ENCODE measurements at regions of chr19 and their contacts with region 1.

Region 1: GRCh38 chr19:39435499-39436349 is at the start of gene RPS16:
- H3K4me3 ChIP-seq: peak within 1 kb of the TSS; percentile 79
- H3K27ac ChIP-seq: peak within 1 kb of the TSS; percentile 100
- H3K4me1 ChIP-seq: peaks cover 29% of the 10 kb centered on the region
- CTCF ChIP-seq: peak; percentile 70; the same call in 1 of the 2 replicates

Region 2: DNA sequence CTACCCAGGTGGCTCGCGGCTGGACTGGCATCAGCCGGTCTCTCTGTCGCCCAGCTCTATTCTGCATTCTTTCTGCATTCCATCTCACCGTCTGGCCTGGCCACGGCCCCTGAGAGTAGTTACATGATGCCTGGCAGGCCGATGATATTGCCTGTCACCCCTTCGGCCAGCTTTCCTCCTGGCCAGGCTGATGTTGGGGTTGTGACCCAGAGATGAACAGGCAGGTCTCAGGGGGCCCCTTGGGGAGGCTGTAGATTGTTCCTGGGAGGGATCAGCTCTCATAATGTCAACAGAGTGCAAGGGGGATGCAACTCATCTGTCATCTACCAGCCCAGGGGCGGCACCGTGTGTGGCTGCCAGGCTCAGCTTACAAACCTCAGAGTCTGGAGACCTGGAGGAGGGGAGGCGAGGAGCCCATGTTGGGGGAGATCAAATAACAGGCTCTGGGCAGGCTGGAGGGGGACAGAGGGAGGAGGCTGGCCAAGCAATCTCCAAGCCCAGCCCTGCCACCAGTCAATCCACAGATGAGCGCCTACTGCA is 446.6 kb before region 1 on chr19:
- CTCF ChIA-PET with region 1: no interaction called
- POLR2A ChIA-PET with region 1: interaction called, 11 read pairs
- H3K4me3 ChIP-seq: no peak overlapping the region
- H3K27ac ChIP-seq: peak overlapping the region; percentile 74
- H3K4me1 ChIP-seq: peaks cover 12% of the 10 kb centered on the region
- CTCF ChIP-seq: no peak

Region 3: DNA sequence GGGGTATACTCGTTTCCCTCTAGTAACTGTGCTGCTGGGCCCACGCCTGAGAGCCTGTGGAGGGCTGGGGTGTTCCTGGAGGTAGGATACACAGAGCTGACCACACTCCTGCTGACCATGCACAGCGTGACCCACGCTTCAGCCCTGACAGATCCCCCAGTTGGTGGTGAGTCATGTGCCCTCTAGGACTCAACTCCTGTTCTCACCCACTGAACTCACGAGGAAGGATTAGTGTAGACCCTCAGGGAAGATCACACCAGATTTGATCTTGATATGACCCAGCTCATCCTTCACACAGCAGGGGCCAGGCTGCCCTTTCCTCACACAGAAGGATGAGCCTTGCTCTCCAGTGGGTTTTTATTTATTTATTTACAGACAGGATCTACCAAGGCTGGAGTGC is 364.8 kb before region 1 on chr19:
- CTCF ChIA-PET with region 1: no interaction called
- POLR2A ChIA-PET with region 1: no interaction called
- H3K4me3 ChIP-seq: no peak overlapping the region
- H3K27ac ChIP-seq: no peak overlapping the region
- H3K4me1 ChIP-seq: no peaks in the 10 kb centered on the region
- CTCF ChIP-seq: no peak

Region 4: GRCh38 chr19:39406656-39407393 is 28.9 kb before region 1 on chr19 and contains the start of gene ZFP36:
- CTCF ChIA-PET with region 1: interaction called, 13 read pairs
- POLR2A ChIA-PET with region 1: interaction called, 113 read pairs
- H3K4me3 ChIP-seq: peak within 1 kb of the TSS; percentile 61
- H3K27ac ChIP-seq: peak within 1 kb of the TSS; percentile 77
- H3K4me1 ChIP-seq: peaks cover 60% of the 10 kb centered on the region
- CTCF ChIP-seq: peak; percentile 90

Region 5: DNA sequence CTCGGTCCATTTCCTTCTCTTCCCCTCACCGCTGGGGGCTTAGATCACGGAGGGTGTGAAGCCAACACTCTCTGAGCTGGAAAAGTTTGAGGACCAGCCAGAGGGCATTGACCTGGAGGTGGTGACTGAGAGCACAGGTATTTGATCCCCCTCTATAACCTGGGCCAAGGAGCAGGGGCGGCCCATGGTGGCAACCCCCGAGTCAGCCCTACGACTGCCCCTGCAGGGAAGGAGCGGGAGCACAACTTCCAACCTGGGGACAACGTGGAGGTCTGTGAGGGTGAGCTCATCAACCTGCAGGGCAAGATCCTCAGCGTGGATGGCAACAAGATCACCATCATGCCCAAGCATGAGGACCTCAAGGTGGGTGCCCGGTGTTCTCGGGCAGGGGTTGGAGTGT is 33.3 kb after region 1 on chr19:
- CTCF ChIA-PET with region 1: interaction called, 16 read pairs
- POLR2A ChIA-PET with region 1: interaction called, 37 read pairs
- H3K4me3 ChIP-seq: no peak overlapping the region
- H3K27ac ChIP-seq: peak overlapping the region; percentile 41; the same call in 1 of the 2 replicates
- H3K4me1 ChIP-seq: no peaks in the 10 kb centered on the region
- CTCF ChIP-seq: 0 out of 2 replicates have a peak, but pooled peaks have one; percentile 9

Region 6: DNA sequence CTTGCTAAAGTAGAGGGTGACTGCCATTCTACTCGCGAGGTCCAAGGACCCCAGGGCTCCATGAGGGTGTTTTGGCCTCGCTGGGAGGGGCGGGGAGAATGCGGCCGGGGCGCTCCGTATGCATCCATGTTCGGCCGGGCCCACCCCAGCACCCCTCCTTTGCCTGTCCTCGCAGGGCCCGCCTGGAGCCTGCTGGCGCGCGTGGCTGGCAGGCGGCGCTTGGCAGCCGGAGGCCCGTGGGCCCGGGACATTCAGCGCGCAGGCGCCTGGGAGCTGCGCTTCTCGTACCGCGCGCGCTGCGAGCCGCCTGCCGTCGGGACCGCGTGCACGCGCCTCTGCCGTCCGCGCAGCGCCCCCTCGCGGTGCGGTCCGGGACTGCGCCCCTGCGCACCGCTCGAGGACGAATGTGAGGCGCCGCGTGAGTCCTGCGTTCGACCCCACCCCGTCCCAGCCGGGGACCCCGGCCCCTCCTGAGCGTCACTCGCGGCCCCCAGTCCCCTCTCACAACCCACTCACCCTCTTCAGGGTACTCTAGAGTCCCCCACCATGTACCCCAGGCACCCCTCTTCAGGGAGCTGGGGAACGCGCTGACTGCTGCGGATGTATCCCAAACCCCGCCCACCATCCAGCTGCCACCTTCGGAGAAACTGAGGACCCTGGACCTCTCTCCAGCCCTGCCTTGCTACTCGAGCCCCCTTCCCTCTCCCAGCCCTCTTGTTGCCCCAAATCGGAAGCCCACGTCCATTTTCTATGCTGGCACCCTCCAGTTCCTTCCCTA is 67.1 kb after region 1 on chr19:
- CTCF ChIA-PET with region 1: interaction called, 20 read pairs
- POLR2A ChIA-PET with region 1: interaction called, 29 read pairs
- H3K4me3 ChIP-seq: no peak overlapping the region
- H3K27ac ChIP-seq: no peak overlapping the region
- H3K4me1 ChIP-seq: peaks cover 19% of the 10 kb centered on the region
- CTCF ChIP-seq: peak; percentile 71

Region 7: GRCh38 chr19:39539519-39540332 is 104.0 kb after region 1 on chr19 and contains the start of gene EID2:
- CTCF ChIA-PET with region 1: interaction called, 111 read pairs
- POLR2A ChIA-PET with region 1: interaction called, 56 read pairs
- H3K4me3 ChIP-seq: peak within 1 kb of the TSS; percentile 83
- H3K27ac ChIP-seq: peak within 1 kb of the TSS; percentile 97
- H3K4me1 ChIP-seq: peaks cover 16% of the 10 kb centered on the region
- CTCF ChIP-seq: peak; percentile 97

Region 8: GRCh38 chr19:39970675-39971379 is 535.1 kb after region 1 on chr19 and contains the start of gene PSMC4:
- CTCF ChIA-PET with region 1: no interaction called
- POLR2A ChIA-PET with region 1: interaction called, 14 read pairs
- H3K4me3 ChIP-seq: peak within 1 kb of the TSS; percentile 66
- H3K27ac ChIP-seq: peak within 1 kb of the TSS; percentile 80
- H3K4me1 ChIP-seq: peaks cover 14% of the 10 kb centered on the region
- CTCF ChIP-seq: peak; percentile 100